ENCODE measurements at regions of chr2 and their contacts with region 1.

Region 1: GRCh38 chr2:207734264-207734635 is 22.8 kb downstream of the CCNYL1 start:
- DNase-seq: no peak
- H3K4me3 Mint-ChIP-seq: no peak overlapping the region
- H3K27ac Mint-ChIP-seq: no peak overlapping the region
- H3K4me1 Mint-ChIP-seq: no peaks in the 10 kb centered on the region
- H3K27me3 Mint-ChIP-seq: no peaks in the 10 kb centered on the region
- CTCF ChIP-seq: no peak

Region 2: GRCh38 chr2:206800506-206801417 is 933.5 kb before region 1 on chr2:
- CTCF ChIA-PET with region 1: no interaction called
- intact Hi-C with region 1: loop called (anchors 10 kb)
- DNase-seq: peak; percentile 64
- H3K4me3 Mint-ChIP-seq: no peak overlapping the region
- H3K27ac Mint-ChIP-seq: no peak overlapping the region
- H3K4me1 Mint-ChIP-seq: no peaks in the 10 kb centered on the region
- H3K27me3 Mint-ChIP-seq: no peaks in the 10 kb centered on the region
- CTCF ChIP-seq: peak; percentile 62

Region 3: GRCh38 chr2:207571370-207571769 is 162.9 kb before region 1 on chr2:
- CTCF ChIA-PET with region 1: no interaction called
- intact Hi-C with region 1: no loop called
- DNase-seq: no peak
- H3K4me3 Mint-ChIP-seq: no peak overlapping the region
- H3K27ac Mint-ChIP-seq: no peak overlapping the region
- H3K4me1 Mint-ChIP-seq: no peaks in the 10 kb centered on the region
- H3K27me3 Mint-ChIP-seq: no peaks in the 10 kb centered on the region
- CTCF ChIP-seq: no peak

Measured in Calu3 (cell line).